ENCODE measurements at regions of chr19 and their contacts with region 1.

Region 1: DNA sequence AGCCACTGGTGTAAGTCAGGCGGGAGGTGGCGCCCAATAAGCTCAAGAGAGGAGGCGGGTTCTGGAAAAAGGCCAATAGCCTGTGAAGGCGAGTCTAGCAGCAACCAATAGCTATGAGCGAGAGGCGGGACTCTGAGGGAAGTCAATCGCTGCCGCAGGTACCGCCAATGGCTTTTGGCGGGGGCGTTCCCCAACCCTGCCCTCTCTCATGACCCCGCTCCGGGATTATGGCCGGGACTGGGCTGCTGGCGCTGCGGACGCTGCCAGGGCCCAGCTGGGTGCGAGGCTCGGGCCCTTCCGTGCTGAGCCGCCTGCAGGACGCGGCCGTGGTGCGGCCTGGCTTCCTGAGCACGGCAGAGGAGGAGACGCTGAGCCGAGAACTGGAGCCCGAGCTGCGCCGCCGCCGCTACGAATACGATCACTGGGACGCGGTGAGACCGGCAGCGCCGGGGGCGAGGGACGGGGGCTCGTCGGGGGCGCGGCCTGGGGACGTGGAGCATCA is at the start of gene ALKBH7:
- DNase-seq: peak; percentile 99
- ATAC-seq: peak; percentile 78
- H3K4me3 Mint-ChIP-seq: peak within 1 kb of the TSS; percentile 83
- H3K27ac Mint-ChIP-seq: peak within 1 kb of the TSS; percentile 92
- H3K4me1 Mint-ChIP-seq: peaks cover 10% of the 10 kb centered on the region
- H3K27me3 Mint-ChIP-seq: no peaks in the 10 kb centered on the region
- CTCF ChIP-seq: no peak
- total RNA-seq, gene ALKBH7: 34.9 to 40.1 TPM

Region 2: DNA sequence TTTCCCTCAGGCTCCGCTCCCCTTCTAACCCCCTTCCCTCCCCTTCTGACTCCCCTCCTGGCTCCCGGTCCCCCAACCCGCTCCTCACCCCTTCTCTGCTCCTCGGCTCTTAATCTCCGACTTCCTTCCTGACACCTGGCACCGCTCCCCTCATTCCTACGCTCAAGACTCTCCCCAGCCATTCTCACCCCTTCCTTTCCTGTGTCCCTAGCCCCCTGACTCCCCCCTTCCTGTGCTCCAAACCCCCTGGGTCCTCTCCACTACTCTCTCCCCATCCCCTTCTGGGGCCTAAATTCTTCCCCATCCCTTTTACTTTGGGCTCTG is 10.7 kb before region 1 on chr19:
- CTCF ChIA-PET with region 1: interaction called, 9 read pairs
- POLR2A ChIA-PET with region 1: interaction called, 20 read pairs
- intact Hi-C with region 1: no loop called
- DNase-seq: no peak
- ATAC-seq: peak; percentile 2
- H3K4me3 Mint-ChIP-seq: peak overlapping the region; percentile 92
- H3K27ac Mint-ChIP-seq: peak overlapping the region; percentile 97
- H3K4me1 Mint-ChIP-seq: peaks cover 14% of the 10 kb centered on the region
- H3K27me3 Mint-ChIP-seq: no peaks in the 10 kb centered on the region
- CTCF ChIP-seq: no peak